ENCODE measurements at regions of chr14 and their contacts with region 1.

Region 1: GRCh38 chr14:37594238-37594914 is 673 bp downstream of the FOXA1 start:
- DNase-seq: peak; percentile 68
- H3K4me3 Mint-ChIP-seq: peak overlapping the region; percentile 51
- H3K27ac Mint-ChIP-seq: peak overlapping the region; percentile 10
- H3K4me1 Mint-ChIP-seq: peaks cover 31% of the 10 kb centered on the region
- H3K27me3 Mint-ChIP-seq: peaks cover 73% of the 10 kb centered on the region

Region 2: GRCh38 chr14:36505181-36505815 is 1089.1 kb before region 1 on chr14:
- CTCF ChIA-PET with region 1: no interaction called
- POLR2A ChIA-PET with region 1: no interaction called
- intact Hi-C with region 1: loop called (anchors 5 kb)
- DNase-seq: peak; percentile 36
- H3K4me3 Mint-ChIP-seq: no peak overlapping the region
- H3K27ac Mint-ChIP-seq: no peak overlapping the region
- H3K4me1 Mint-ChIP-seq: peaks cover 18% of the 10 kb centered on the region
- H3K27me3 Mint-ChIP-seq: peaks cover 70% of the 10 kb centered on the region

Region 3: GRCh38 chr14:36580856-36581831 is 1013.2 kb before region 1 on chr14:
- CTCF ChIA-PET with region 1: no interaction called
- POLR2A ChIA-PET with region 1: no interaction called
- intact Hi-C with region 1: loop called (anchors 10 kb)
- DNase-seq: peak; percentile 37
- H3K4me3 Mint-ChIP-seq: no peak overlapping the region
- H3K27ac Mint-ChIP-seq: no peak overlapping the region
- H3K4me1 Mint-ChIP-seq: no peaks in the 10 kb centered on the region
- H3K27me3 Mint-ChIP-seq: peaks cover 60% of the 10 kb centered on the region

Region 4: GRCh38 chr14:37246427-37246914 is 347.9 kb before region 1 on chr14:
- CTCF ChIA-PET with region 1: no interaction called
- POLR2A ChIA-PET with region 1: no interaction called
- intact Hi-C with region 1: loop called (anchors 1 kb)
- DNase-seq: no peak
- H3K4me3 Mint-ChIP-seq: no peak overlapping the region
- H3K27ac Mint-ChIP-seq: no peak overlapping the region
- H3K4me1 Mint-ChIP-seq: no peaks in the 10 kb centered on the region
- H3K27me3 Mint-ChIP-seq: peaks cover 1% of the 10 kb centered on the region

Region 5: DNA sequence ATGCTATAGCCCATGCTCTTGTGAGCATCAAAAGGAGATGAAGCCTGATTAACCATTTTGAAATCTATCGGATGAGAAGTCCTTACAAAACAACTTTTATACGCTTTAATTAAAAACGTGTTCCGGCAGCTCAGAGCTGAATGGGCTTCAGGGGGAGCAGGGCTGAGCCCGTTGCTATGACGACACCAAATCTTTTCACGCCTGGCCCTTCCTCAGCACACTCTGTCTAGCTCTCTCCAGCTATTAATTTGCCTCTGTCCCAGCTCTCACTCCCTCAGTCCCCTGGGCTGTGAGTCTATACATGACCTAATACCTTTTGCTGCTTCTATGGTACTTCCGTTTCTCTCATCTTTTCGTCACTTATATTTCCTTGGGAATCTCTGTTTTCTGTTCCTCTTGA is 15.1 kb before region 1 on chr14:
- CTCF ChIA-PET with region 1: no interaction called
- POLR2A ChIA-PET with region 1: no interaction called
- intact Hi-C with region 1: no loop called
- DNase-seq: no peak
- H3K4me3 Mint-ChIP-seq: no peak overlapping the region
- H3K27ac Mint-ChIP-seq: no peak overlapping the region
- H3K4me1 Mint-ChIP-seq: no peaks in the 10 kb centered on the region
- H3K27me3 Mint-ChIP-seq: peaks cover 11% of the 10 kb centered on the region

Region 6: DNA sequence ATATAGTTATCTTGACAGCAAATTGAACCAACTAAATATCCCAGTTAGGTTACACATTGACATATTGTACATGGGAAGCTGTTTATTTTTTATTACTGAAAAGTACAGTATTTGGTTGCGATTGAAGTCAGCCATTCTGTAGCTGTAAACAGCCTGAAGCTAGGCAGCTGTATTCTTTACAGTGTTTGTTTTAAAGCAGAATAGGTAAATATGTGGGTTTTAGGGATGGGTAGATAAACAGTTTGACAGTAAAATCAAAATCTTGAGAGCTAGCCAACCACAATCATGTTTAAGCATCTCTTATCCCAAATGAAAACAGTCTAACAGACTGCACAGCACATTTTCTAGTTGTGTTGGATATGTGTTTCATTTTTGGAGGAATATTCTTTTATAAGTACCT is 46.7 kb after region 1 on chr14:
- CTCF ChIA-PET with region 1: no interaction called
- POLR2A ChIA-PET with region 1: no interaction called
- intact Hi-C with region 1: no loop called
- DNase-seq: no peak
- H3K4me3 Mint-ChIP-seq: no peak overlapping the region
- H3K27ac Mint-ChIP-seq: no peak overlapping the region
- H3K4me1 Mint-ChIP-seq: no peaks in the 10 kb centered on the region
- H3K27me3 Mint-ChIP-seq: no peaks in the 10 kb centered on the region

Region 7: DNA sequence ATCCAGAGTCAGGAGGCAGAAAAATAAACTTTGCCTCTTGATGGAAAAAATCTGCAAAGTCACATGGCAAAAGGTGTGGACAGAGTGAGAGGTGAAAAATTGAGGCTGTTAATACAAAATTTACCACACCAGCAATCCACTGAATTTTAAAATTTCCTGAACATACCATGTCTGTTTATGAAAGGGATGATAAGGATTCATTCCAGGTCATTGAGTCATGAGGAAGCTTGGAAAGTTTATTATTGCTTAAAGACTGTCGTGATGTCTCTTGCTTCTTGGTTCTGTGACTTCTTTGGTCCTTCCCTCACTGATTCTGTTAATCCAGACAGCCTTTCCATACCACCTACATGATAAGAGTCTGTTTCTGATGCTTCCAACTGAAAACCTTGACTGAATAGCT is 74.3 kb after region 1 on chr14:
- CTCF ChIA-PET with region 1: no interaction called
- POLR2A ChIA-PET with region 1: no interaction called
- intact Hi-C with region 1: no loop called
- DNase-seq: no peak
- H3K4me3 Mint-ChIP-seq: no peak overlapping the region
- H3K27ac Mint-ChIP-seq: no peak overlapping the region
- H3K4me1 Mint-ChIP-seq: no peaks in the 10 kb centered on the region
- H3K27me3 Mint-ChIP-seq: no peaks in the 10 kb centered on the region

Region 8: GRCh38 chr14:38079268-38079667 is 484.9 kb after region 1 on chr14:
- CTCF ChIA-PET with region 1: no interaction called
- POLR2A ChIA-PET with region 1: no interaction called
- intact Hi-C with region 1: loop called (anchors 10 kb)
- DNase-seq: no peak
- H3K4me3 Mint-ChIP-seq: no peak overlapping the region
- H3K27ac Mint-ChIP-seq: peak overlapping the region; percentile 55
- H3K4me1 Mint-ChIP-seq: peaks cover 55% of the 10 kb centered on the region
- H3K27me3 Mint-ChIP-seq: no peaks in the 10 kb centered on the region

Measured in activated CD4-positive, alpha-beta memory T cell treated with anti-CD3 and anti-CD28 coated beads for 36 hours (primary cell).